ENCODE measurements at regions of chr22 and their contacts with region 1.

Region 1: DNA sequence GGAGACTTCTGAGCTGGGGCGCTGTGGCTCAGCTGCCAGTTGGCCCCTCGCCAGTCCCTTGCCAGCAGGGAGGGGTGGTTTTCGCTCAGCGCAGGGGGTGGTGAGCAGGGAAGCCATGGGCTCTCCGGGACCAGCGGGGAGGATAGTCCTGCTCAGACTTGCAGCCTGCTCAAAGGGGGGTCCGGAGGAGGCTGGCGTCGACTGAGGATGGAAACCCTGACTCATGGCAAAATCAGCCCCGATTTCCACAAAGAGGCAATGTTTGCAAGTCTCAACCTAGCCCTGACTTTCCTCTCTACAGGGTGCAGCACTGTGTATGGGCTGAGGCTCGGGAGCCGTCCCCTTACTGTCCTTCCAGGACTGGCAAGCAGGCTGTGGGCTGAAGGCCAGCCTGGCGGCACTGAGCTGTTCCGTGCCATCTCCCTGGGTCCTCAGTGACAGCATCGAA is 35.1 kb downstream of the FBLN1 start:
- DNase-seq: peak; percentile 97
- H3K4me3 Mint-ChIP-seq: peak overlapping the region; percentile 20
- H3K27ac Mint-ChIP-seq: peak overlapping the region; percentile 87
- H3K4me1 Mint-ChIP-seq: peaks cover 13% of the 10 kb centered on the region
- H3K27me3 Mint-ChIP-seq: no peaks in the 10 kb centered on the region
- CTCF ChIP-seq: no peak

Region 2: GRCh38 chr22:45254789-45255278 is 282.9 kb before region 1 on chr22:
- CTCF ChIA-PET with region 1: no interaction called
- POLR2A ChIA-PET with region 1: no interaction called
- intact Hi-C with region 1: no loop called
- DNase-seq: no peak
- H3K4me3 Mint-ChIP-seq: no peak overlapping the region
- H3K27ac Mint-ChIP-seq: no peak overlapping the region
- H3K4me1 Mint-ChIP-seq: no peaks in the 10 kb centered on the region
- H3K27me3 Mint-ChIP-seq: no peaks in the 10 kb centered on the region
- CTCF ChIP-seq: no peak

Region 3: DNA sequence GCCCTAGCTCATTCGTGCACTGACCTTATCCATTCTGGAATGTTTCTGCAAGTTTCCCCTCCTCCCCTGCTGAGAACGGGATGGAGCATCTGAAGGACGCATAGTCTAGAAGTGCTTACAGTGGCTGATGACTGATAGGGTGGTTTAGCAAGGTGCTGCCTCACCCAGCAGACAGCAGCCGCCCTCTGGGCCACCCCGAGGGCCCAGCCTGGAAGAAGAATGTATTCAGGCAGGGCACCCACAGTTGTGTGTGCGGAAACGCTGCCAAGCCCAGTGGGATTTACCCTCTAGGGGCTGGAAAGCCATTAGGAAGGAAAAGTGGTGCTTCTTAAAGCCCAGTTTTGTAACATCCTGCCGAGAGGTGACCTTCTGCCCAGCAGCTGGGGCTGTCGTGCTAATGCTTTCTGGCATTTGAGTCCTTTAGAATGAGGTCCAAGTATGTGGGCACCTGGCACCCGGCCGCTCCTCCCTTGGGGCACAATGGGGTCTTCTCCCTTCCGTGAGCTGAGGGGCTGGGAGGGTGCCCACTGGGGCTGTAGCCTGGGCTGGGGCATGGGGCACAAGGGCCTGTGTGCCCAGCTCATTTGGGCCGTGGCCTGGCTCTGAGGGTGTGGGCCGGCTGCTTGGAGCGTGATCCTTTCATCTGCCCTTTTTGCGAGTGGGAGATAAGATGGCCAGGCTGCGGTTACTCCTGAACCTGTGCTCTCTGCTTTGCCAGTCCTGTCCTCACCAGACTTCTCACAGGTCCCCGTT is 20.7 kb before region 1 on chr22:
- CTCF ChIA-PET with region 1: no interaction called
- POLR2A ChIA-PET with region 1: interaction called, 15 read pairs
- intact Hi-C with region 1: no loop called
- DNase-seq: peak; percentile 87
- H3K4me3 Mint-ChIP-seq: no peak overlapping the region
- H3K27ac Mint-ChIP-seq: peak overlapping the region; percentile 40
- H3K4me1 Mint-ChIP-seq: peaks cover 47% of the 10 kb centered on the region
- H3K27me3 Mint-ChIP-seq: no peaks in the 10 kb centered on the region
- CTCF ChIP-seq: no peak

Region 4: DNA sequence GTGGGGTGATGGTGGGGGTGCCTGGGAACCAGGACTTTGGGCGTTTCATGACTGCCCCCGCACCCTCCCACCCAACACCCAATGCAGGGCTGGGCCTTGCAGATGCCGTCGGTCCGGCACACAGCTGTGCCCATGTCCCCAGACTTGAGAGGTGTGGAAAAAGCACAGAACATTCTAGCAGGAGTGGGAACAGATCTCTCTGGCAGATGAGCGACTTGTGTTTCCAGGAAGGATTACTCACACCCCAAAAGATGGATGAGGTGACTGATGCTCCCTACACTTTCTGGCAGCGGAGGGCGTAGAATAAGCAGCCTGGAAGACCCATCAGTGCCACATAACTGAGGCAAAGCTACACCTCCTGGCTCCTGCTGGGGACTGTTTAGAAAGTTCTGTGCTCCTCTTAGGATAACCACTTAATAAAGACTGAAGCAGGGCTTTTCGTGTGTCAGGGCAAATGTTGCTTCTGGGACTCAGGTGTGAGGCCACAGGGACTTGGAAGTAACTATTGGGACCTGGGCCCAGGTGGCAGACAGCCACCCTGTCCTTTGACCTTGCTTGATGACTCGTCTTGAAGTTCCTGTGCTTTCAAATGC is 10.9 kb before region 1 on chr22:
- CTCF ChIA-PET with region 1: no interaction called
- POLR2A ChIA-PET with region 1: interaction called, 10 read pairs
- intact Hi-C with region 1: no loop called
- DNase-seq: no peak
- H3K4me3 Mint-ChIP-seq: no peak overlapping the region
- H3K27ac Mint-ChIP-seq: peak overlapping the region; percentile 23
- H3K4me1 Mint-ChIP-seq: peaks cover 7% of the 10 kb centered on the region
- H3K27me3 Mint-ChIP-seq: no peaks in the 10 kb centered on the region
- CTCF ChIP-seq: no peak

Region 5: DNA sequence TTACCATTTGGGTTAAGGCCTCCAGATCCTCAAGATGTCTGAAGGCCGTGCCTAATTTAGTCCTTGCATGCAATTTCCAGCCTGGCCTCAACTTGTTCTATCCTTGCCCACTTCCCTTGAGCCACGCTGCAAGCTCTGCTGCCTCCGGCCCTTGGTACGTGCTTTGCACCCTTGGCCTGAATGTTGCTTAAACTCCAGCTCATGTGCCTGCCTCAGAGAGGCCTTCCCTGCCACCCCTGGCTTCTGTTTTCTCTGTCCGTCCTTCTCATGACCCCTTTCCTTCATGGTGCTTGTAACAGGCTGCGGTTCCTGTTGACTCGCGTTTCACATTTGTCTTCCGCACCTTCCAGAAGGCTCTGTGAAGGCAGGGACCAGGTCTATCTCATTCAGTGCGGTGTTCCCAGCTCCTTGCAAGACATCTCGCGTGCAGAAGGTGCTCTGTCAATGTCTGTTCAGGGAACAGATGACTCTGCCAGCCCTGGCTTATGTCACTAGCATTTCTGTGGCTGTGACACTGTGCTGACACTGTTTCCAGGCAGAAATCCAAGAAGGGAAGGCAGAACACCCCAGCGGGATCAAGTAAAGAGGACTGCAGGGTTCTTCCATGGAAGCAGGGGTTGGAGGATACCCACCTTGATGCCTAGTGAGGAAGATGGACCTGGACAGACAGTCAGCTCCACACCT is 26.7 kb after region 1 on chr22:
- CTCF ChIA-PET with region 1: no interaction called
- POLR2A ChIA-PET with region 1: no interaction called
- intact Hi-C with region 1: no loop called
- DNase-seq: no peak
- H3K4me3 Mint-ChIP-seq: no peak overlapping the region
- H3K27ac Mint-ChIP-seq: no peak overlapping the region
- H3K4me1 Mint-ChIP-seq: no peaks in the 10 kb centered on the region
- H3K27me3 Mint-ChIP-seq: no peaks in the 10 kb centered on the region
- CTCF ChIP-seq: no peak